AG04449 (cell line): ENCODE measurements at regions of chr12 and their contacts with region 1.

Region 1: DNA sequence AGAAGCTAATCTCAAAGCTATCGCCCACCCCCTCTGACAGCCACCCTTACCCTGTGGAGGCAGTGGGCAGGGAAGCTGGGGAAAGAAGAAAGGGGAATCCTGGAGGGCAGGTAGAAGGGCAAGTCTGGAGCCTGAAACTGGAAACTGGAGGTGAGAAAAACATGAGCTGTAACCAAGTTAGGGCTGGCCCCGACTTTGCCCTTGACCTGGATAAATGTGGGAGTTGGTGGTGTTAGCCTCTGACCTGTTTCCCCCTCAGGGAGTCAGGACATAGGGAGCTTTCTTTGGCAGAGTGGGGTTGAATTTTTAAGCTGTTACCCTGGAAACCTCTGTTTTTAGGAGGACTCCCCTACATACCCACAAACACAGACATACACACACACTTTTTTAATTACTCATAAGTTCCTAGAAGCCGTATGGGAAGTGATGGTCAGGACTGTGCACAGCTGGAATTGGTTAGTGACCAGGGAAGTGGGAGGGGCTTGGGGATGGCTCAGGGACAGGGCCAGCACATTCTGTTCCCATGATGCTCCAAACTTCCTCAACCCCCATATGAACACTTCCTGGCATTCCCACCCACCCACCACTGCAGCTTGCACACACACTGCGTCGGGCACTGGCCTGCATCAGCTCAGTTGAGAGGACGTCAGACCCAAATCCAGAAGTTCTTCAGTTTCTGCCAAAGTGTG is 5.0 kb upstream of the MMP19 start:
- DNase-seq: peak; percentile 98
- H3K4me3 ChIP-seq: peak overlapping the region; percentile 47
- CTCF ChIP-seq: no peak

Region 2: GRCh38 chr12:55829967-55830600 is 17.7 kb before region 1 on chr12:
- CTCF ChIA-PET with region 1: interaction called, 10 read pairs
- POLR2A ChIA-PET with region 1: interaction called, 31 read pairs
- DNase-seq: no peak
- H3K4me3 ChIP-seq: peak overlapping the region; percentile 78
- CTCF ChIP-seq: no peak